ENCODE measurements at regions of chr3 and their contacts with region 1.

Region 1: GRCh38 chr3:31922962-31923361 is 58.1 kb downstream of the OSBPL10 start:
- DNase-seq: no peak
- ATAC-seq: no peak
- H3K4me3 Mint-ChIP-seq: no peak overlapping the region
- H3K27ac Mint-ChIP-seq: no peak overlapping the region
- H3K4me1 Mint-ChIP-seq: peaks cover 34% of the 10 kb centered on the region
- H3K27me3 Mint-ChIP-seq: peaks cover 2% of the 10 kb centered on the region

Region 2: GRCh38 chr3:31247850-31248562 is 675.0 kb before region 1 on chr3:
- CTCF ChIA-PET with region 1: no interaction called
- POLR2A ChIA-PET with region 1: no interaction called
- intact Hi-C with region 1: loop called in 1 of 2 experiments (anchors 5 kb)
- DNase-seq: peak; percentile 52
- ATAC-seq: peak; percentile 21
- H3K4me3 Mint-ChIP-seq: no peak overlapping the region
- H3K27ac Mint-ChIP-seq: peak overlapping the region; percentile 51
- H3K4me1 Mint-ChIP-seq: peaks cover 53% of the 10 kb centered on the region
- H3K27me3 Mint-ChIP-seq: peaks cover 3% of the 10 kb centered on the region

Region 3: GRCh38 chr3:31754575-31755278 is 168.2 kb before region 1 on chr3:
- CTCF ChIA-PET with region 1: no interaction called
- POLR2A ChIA-PET with region 1: no interaction called
- intact Hi-C with region 1: loop called in 1 of 2 experiments (anchors 5 kb)
- DNase-seq: no peak
- ATAC-seq: peak; percentile 57
- H3K4me3 Mint-ChIP-seq: no peak overlapping the region
- H3K27ac Mint-ChIP-seq: peak overlapping the region; percentile 95
- H3K4me1 Mint-ChIP-seq: peaks cover 48% of the 10 kb centered on the region
- H3K27me3 Mint-ChIP-seq: peaks cover 2% of the 10 kb centered on the region

Region 4: GRCh38 chr3:31777092-31777491 is 145.9 kb before region 1 on chr3:
- CTCF ChIA-PET with region 1: no interaction called
- POLR2A ChIA-PET with region 1: no interaction called
- intact Hi-C with region 1: loop called (anchors 5 to 10 kb)
- DNase-seq: no peak
- ATAC-seq: peak; percentile 49
- H3K4me3 Mint-ChIP-seq: no peak overlapping the region
- H3K27ac Mint-ChIP-seq: no peak overlapping the region
- H3K4me1 Mint-ChIP-seq: peaks cover 26% of the 10 kb centered on the region
- H3K27me3 Mint-ChIP-seq: peaks cover 14% of the 10 kb centered on the region

Region 5: GRCh38 chr3:31908391-31909097 is 14.4 kb before region 1 on chr3:
- CTCF ChIA-PET with region 1: no interaction called
- POLR2A ChIA-PET with region 1: no interaction called
- intact Hi-C with region 1: no loop called
- DNase-seq: no peak
- ATAC-seq: peak; percentile 19
- H3K4me3 Mint-ChIP-seq: no peak overlapping the region
- H3K27ac Mint-ChIP-seq: no peak overlapping the region
- H3K4me1 Mint-ChIP-seq: peaks cover 12% of the 10 kb centered on the region
- H3K27me3 Mint-ChIP-seq: no peaks in the 10 kb centered on the region

Region 6: DNA sequence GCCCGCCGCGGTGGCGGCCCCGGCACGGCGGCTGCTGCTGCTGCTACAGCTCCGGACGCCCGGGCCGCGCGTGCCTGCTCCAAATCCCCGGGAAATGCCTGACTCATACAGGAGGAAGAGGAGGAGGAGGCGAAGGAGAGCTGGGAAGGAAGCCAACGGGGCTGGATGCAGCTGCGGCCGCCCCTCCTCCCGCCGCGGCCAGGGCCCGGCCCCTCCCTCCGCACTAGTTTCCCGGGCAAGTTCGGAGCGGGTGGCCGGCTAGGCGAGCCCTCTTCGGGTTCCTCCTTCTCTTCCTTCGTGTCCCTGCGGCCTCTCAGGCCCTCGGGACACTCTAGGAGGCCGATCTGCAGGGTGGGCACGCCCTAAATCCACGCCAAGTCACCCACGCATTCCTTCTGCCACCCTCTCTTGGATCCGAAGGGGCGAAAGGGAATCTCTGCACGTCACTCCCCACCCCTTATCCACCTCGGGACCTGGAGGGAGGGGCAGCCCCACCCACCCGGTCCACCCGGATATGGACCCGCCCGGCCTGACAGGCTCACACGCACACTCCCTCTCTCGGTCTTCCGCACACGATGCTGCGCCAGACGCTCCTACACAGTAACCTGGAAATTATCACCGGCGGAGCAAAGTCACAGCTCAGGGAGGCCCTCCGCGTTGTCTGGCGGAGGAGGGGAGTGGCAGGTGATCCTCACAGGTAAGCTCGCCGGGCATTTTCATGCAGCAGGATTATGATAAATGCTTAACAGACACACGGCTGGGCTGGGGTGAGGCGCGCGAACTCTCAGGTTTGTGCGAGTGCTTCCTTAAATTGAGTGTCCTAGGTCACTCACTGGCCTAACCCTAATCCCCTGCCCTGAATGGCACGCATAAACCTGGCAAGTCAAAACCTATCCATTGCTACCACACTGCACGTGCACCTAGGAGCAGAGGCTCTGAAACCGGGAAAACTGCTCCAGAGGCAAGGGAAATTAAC is 58.5 kb after region 1 on chr3 and contains the starts of genes OSBPL10 and ZNF860:
- CTCF ChIA-PET with region 1: no interaction called
- POLR2A ChIA-PET with region 1: no interaction called
- intact Hi-C with region 1: loop called (anchors 1 kb)
- DNase-seq: peak; percentile 58
- ATAC-seq: peak; percentile 44
- H3K4me3 Mint-ChIP-seq: peak within 1 kb of the TSS; percentile 74
- H3K27ac Mint-ChIP-seq: peak within 1 kb of the TSS; percentile 53
- H3K4me1 Mint-ChIP-seq: peaks cover 20% of the 10 kb centered on the region
- H3K27me3 Mint-ChIP-seq: peaks cover 39% of the 10 kb centered on the region
- total RNA-seq, gene OSBPL10: 11.2 to 11.8 TPM
- total RNA-seq, gene ZNF860: 0.11 to 0.30 TPM

Region 7: DNA sequence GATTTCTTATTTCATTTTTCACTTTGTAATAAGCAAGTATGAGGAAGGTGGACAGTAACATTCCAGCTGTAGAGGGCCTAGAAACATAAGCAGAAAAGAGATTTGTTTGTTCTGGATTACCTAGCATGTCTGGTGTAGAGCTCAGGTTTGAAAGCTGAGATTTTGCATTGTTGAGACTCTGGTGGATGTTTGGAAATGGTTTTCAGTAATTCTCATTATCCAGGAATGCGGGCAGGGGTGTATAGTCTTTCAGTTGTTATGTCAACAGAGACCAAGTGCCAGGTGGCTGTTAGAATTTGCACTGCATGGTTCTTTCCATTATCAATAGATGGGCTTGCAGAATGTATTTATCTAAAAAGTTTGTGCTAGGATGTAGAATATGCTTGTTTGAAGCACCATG is 194.4 kb after region 1 on chr3:
- CTCF ChIA-PET with region 1: no interaction called
- POLR2A ChIA-PET with region 1: no interaction called
- intact Hi-C with region 1: loop called in 1 of 2 experiments (anchors 1 kb)
- DNase-seq: no peak
- ATAC-seq: no peak
- H3K4me3 Mint-ChIP-seq: no peak overlapping the region
- H3K27ac Mint-ChIP-seq: no peak overlapping the region
- H3K4me1 Mint-ChIP-seq: peaks cover 55% of the 10 kb centered on the region
- H3K27me3 Mint-ChIP-seq: no peaks in the 10 kb centered on the region

Measured in activated CD4-positive, alpha-beta T cell treated with anti-CD3 and anti-CD28 coated beads for 36 hours (primary cell).